Tibial artery (tissue), 4 donors: ENCODE measurements at regions of chr19 and their contacts with region 1.

Region 1: GRCh38 chr19:10835754-10836477 is at the start of gene TMED1:
- DNase-seq: peak; percentile 96 to 100
- H3K4me3 ChIP-seq: peak within 1 kb of the TSS; percentile 69 to 74
- H3K27ac ChIP-seq: peak within 1 kb of the TSS; percentile 95 to 99
- H3K4me1 ChIP-seq: peaks cover 0 to 21% (median 9%) of the 10 kb centered on the region in 4 donors
- H3K27me3 ChIP-seq: no peaks in the 10 kb centered on the region
- CTCF ChIP-seq: peak; percentile 17 to 63

Region 2: GRCh38 chr19:10760273-10760944 is 75.5 kb before region 1 on chr19:
- intact Hi-C with region 1: no loop called
- DNase-seq: no peak
- H3K4me3 ChIP-seq: no peak overlapping the region
- H3K27ac ChIP-seq: no peak overlapping the region
- H3K4me1 ChIP-seq: peaks cover 0 to 35% (median 18%) of the 10 kb centered on the region in 4 donors
- H3K27me3 ChIP-seq: no peaks in the 10 kb centered on the region
- CTCF ChIP-seq: no peak

Region 3: DNA sequence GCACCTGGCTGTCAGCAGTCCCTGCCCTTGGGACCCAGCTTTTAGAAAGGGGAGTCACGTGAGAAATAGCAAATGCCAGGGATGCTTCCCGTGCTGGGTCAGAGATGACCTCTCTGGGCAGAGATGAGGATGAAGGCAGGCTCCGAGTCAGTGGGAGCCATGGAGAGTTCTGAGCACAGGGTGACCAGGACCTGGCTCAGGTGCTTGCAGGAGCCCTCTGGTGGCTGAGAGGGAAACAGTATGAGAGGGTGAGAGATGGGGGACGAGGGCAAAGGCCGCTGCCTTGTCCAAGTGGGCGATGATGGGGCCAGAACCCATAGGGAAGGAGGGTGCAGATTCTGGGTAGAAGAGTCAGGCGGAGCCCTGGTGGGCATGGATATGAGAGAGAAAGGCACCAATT is 15.7 kb before region 1 on chr19:
- intact Hi-C with region 1: no loop called
- DNase-seq: no peak
- H3K4me3 ChIP-seq: no peak overlapping the region
- H3K27ac ChIP-seq: no peak overlapping the region
- H3K4me1 ChIP-seq: peaks cover 0 to 24% (median 15%) of the 10 kb centered on the region in 4 donors
- H3K27me3 ChIP-seq: no peaks in the 10 kb centered on the region
- CTCF ChIP-seq: no peak

Region 4: GRCh38 chr19:10864538-10864899 is 28.6 kb after region 1 on chr19:
- intact Hi-C with region 1: loop called (anchors 2 kb)
- DNase-seq: peak; percentile 83 to 90
- H3K4me3 ChIP-seq: no peak overlapping the region
- H3K27ac ChIP-seq: peak overlapping the region; percentile 59 to 71
- H3K4me1 ChIP-seq: peaks cover 0 to 23% (median 10%) of the 10 kb centered on the region in 4 donors
- H3K27me3 ChIP-seq: no peaks in the 10 kb centered on the region
- CTCF ChIP-seq: peak; percentile 83 to 87